ENCODE measurements at regions of chr10 and their contacts with region 1.

Region 1: DNA sequence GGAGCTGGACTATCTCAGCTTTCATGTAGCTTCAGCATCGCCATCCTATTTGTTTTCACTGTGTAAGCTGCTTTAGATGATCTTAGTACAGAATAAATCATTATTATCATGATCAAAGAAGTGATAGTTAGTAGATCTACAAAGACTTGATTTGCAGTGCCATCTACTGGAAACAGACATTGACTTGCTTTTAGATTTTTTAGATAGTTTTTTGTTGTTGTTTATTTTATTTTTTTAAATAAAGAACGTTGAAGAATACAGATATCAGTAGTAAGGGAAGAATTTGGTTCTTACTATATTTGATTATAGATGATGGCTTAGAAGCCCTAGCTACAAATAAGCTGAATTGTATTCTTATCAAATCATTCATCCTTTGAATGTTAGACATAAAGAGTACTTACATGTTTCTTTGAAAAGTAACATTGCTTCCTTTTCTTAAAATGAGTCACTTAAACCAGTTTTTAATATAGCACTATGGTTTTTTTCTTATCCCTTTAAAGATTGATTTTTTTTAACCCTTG is 6.3 kb upstream of the SFMBT2 start:
- DNase-seq: no peak
- H3K4me3 Mint-ChIP-seq: no peak overlapping the region
- H3K27ac Mint-ChIP-seq: peak overlapping the region; percentile 32
- H3K4me1 Mint-ChIP-seq: peaks cover 46% of the 10 kb centered on the region
- H3K27me3 Mint-ChIP-seq: peaks cover 37% of the 10 kb centered on the region

Region 2: DNA sequence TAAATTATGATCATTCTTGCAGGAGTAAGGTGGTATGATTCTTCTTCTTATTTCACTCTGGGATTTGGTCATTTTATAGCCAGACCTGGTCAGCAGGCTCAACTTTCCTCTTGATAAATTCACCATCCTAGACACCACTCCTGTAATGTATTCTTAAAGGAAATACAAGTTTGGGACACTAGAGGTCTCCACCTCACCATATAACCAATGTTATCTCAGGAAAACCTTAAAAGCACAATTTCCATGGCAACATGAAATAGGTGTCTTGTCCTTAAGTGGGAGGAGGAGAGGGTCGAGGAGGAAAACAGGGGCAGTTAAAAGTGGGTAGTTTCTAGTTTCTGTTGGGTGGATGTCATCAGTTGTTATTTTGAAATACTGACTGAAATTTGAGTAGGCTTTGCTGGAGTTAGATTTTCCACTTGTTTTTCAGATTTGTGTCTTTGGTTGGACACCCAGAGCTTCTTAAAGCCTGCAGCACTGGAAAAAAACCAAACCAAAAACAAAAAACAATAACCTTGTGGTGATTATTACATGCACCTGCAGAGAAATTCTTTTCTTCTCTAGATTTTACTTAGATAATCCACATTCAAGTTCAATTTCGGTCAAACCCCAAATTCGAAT is 1000.2 kb before region 1 on chr10:
- intact Hi-C with region 1: loop called (anchors 1 kb)
- DNase-seq: no peak
- H3K4me3 Mint-ChIP-seq: no peak overlapping the region
- H3K27ac Mint-ChIP-seq: no peak overlapping the region
- H3K4me1 Mint-ChIP-seq: peaks cover 8% of the 10 kb centered on the region
- H3K27me3 Mint-ChIP-seq: peaks cover 1% of the 10 kb centered on the region

Region 3: GRCh38 chr10:6607778-6608177 is 809.4 kb before region 1 on chr10:
- intact Hi-C with region 1: loop called (anchors 5 kb)
- DNase-seq: no peak
- H3K4me3 Mint-ChIP-seq: no peak overlapping the region
- H3K27ac Mint-ChIP-seq: peak overlapping the region; percentile 69
- H3K4me1 Mint-ChIP-seq: peaks cover 91% of the 10 kb centered on the region
- H3K27me3 Mint-ChIP-seq: no peaks in the 10 kb centered on the region

Region 4: GRCh38 chr10:6838118-6838517 is 579.0 kb before region 1 on chr10:
- intact Hi-C with region 1: loop called (anchors 1 kb)
- DNase-seq: no peak
- H3K4me3 Mint-ChIP-seq: no peak overlapping the region
- H3K27ac Mint-ChIP-seq: no peak overlapping the region
- H3K4me1 Mint-ChIP-seq: peaks cover 5% of the 10 kb centered on the region
- H3K27me3 Mint-ChIP-seq: peaks cover 10% of the 10 kb centered on the region

Region 5: DNA sequence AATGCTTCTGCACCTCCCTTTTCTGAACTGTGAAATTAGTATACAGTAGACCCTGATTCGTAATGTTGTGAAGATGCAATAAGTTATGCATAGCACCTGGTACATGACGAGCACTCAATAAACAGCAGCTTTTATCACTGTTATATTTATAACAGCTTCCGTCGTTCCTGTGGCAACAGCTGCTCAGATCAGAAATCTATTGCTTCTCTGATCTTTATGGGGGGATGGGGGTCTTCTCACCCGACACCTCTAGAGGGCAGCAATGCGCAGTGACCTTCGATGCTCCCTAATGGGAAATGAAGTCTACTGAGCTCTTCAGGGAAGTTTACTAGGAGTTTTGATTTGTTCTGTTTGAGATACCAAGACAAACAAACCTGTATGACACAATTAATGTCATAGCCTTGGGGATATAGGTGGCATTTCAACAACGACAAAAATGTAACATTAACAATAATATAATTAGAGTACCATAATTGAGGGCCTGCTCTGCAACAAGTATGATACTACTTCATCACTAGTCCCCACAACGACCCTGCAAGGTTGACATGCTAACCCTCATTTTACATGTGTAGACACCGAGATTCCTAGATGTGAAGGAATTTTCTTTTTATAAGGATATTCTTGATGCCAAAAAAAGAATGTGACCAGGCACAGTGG is 295.9 kb before region 1 on chr10:
- intact Hi-C with region 1: loop called (anchors 1 kb)
- DNase-seq: peak; percentile 37
- H3K4me3 Mint-ChIP-seq: no peak overlapping the region
- H3K27ac Mint-ChIP-seq: peak overlapping the region; percentile 38
- H3K4me1 Mint-ChIP-seq: peaks cover 6% of the 10 kb centered on the region
- H3K27me3 Mint-ChIP-seq: peaks cover 36% of the 10 kb centered on the region

Region 6: GRCh38 chr10:7243873-7244272 is 173.3 kb before region 1 on chr10:
- intact Hi-C with region 1: no loop called
- DNase-seq: no peak
- H3K4me3 Mint-ChIP-seq: peak overlapping the region; percentile 23
- H3K27ac Mint-ChIP-seq: peak overlapping the region; percentile 5
- H3K4me1 Mint-ChIP-seq: peaks cover 54% of the 10 kb centered on the region
- H3K27me3 Mint-ChIP-seq: no peaks in the 10 kb centered on the region

Region 7: GRCh38 chr10:7260412-7260900 is 156.7 kb before region 1 on chr10:
- intact Hi-C with region 1: loop called (anchors 1 kb)
- DNase-seq: no peak
- H3K4me3 Mint-ChIP-seq: peak overlapping the region; percentile 49
- H3K27ac Mint-ChIP-seq: peak overlapping the region; percentile 75
- H3K4me1 Mint-ChIP-seq: peaks cover 59% of the 10 kb centered on the region
- H3K27me3 Mint-ChIP-seq: no peaks in the 10 kb centered on the region

Region 8: GRCh38 chr10:7687228-7687907 is 270.2 kb after region 1 on chr10:
- intact Hi-C with region 1: loop called (anchors 5 kb)
- DNase-seq: peak; percentile 66
- H3K4me3 Mint-ChIP-seq: no peak overlapping the region
- H3K27ac Mint-ChIP-seq: no peak overlapping the region
- H3K4me1 Mint-ChIP-seq: peaks cover 19% of the 10 kb centered on the region
- H3K27me3 Mint-ChIP-seq: peaks cover 28% of the 10 kb centered on the region

Measured in activated T-helper 1 cell treated with anti-CD3 and anti-CD28 coated beads, Interleukin-12 subunit alpha, Interleukin-12 subunit beta, Interleukin-2, Interleukin-4 antibody, amounts not matched to agents 30 ng/mL and 10 ng/mL and 1 ng/mL, durations not matched to agents 14 hours and 24 hours and 36 hours (primary cell).